ENCODE measurements at regions of chr1 and their contacts with region 1.

Region 1: GRCh38 chr1:11629184-11630016 is 24.8 kb downstream of the FBXO2 start:
- DNase-seq: no peak

Region 2: DNA sequence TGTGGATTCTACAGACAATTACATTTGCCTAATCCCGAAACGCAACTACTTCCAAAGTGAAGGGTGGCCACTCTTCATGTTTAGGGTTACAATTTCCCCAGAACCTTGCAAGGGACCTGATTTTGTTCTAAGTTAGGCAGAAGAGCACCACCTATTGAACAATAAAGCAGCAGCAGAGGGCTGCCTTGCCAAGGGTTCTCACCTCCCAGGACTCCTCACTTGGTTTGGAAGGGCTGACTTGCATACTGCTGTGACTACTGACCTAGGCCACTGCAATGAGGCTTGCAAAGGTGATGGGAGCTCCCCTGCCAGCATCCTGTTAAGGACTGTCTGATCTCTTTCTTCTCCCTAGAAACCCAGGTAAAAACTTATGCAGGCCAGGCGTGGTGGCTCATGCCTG is 381.2 kb before region 1 on chr1:
- intact Hi-C with region 1: loop called in 1 of 2 experiments (anchors 10 kb)
- DNase-seq: no peak